Naive thymus-derived CD4-positive, alpha-beta T cell (primary cell): ENCODE measurements at regions of chr2 and their contacts with region 1.

Region 1: GRCh38 chr2:55175254-55176025 is 56.7 kb downstream of the CLHC1 start:
- DNase-seq: peak in 7 of 9 donors; percentile 40 to 69 (median 63)
- ATAC-seq: peak; percentile 96
- H3K4me3 ChIP-seq: no peak overlapping the region
- H3K4me3 Mint-ChIP-seq: peak overlapping the region in 7 of 10 donors; percentile 0 to 49 (median 24)
- H3K27ac ChIP-seq: no peak overlapping the region
- H3K27ac Mint-ChIP-seq: peak overlapping the region in 5 of 9 donors; percentile 2 to 69 (median 46)
- H3K4me1 ChIP-seq: no peaks in the 10 kb centered on the region
- H3K4me1 Mint-ChIP-seq: peaks cover 0 to 10% (median 8%) of the 10 kb centered on the region in 7 donors
- H3K27me3 ChIP-seq: no peaks in the 10 kb centered on the region
- H3K27me3 Mint-ChIP-seq: no peaks in the 10 kb centered on the region

Region 2: GRCh38 chr2:54106631-54107454 is 1068.6 kb before region 1 on chr2:
- CTCF ChIA-PET with region 1: interaction called, 6 read pairs
- POLR2A ChIA-PET with region 1: no interaction called
- intact Hi-C with region 1: loop called (anchors 5 kb)
- DNase-seq: peak in 7 of 9 donors; percentile 39 to 68 (median 51)
- ATAC-seq: peak; percentile 86
- H3K4me3 ChIP-seq: no peak overlapping the region
- H3K4me3 Mint-ChIP-seq: peak overlapping the region in 1 of 10 donors; percentile 28
- H3K27ac ChIP-seq: no peak overlapping the region
- H3K27ac Mint-ChIP-seq: peak overlapping the region in 2 of 9 donors; percentile 20 to 31
- H3K4me1 ChIP-seq: peaks cover 0 to 4% of the 10 kb centered on the region in 2 donors
- H3K4me1 Mint-ChIP-seq: peaks cover 0 to 12% (median 9%) of the 10 kb centered on the region in 7 donors
- H3K27me3 ChIP-seq: no peaks in the 10 kb centered on the region
- H3K27me3 Mint-ChIP-seq: peaks cover 0 to 15% (median 0%) of the 10 kb centered on the region in 5 donors

Region 3: DNA sequence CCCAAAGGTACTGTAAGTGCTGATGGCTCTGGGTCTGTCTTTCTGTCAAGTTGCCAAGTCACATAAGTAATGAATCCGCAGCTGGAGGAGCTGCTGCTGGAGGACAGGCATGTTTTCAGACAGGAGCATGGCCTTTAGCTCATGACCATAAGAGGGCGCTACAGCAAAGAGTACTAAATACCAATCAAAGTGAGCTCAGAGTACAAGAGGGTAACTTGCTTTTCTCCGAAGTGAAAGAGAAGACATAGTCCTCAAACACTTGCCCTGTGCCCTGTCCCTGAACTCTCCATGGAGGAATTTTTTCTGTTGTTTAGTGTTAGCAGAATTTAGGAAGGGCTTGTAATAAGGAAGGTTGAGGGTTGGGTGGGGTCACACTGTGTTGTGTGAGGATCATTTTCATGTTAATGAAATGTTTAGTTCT is 510.0 kb before region 1 on chr2:
- CTCF ChIA-PET with region 1: interaction called, 3 read pairs
- POLR2A ChIA-PET with region 1: no interaction called
- intact Hi-C with region 1: loop called in 1 of 2 experiments (anchors 2 kb)
- DNase-seq: peak in 7 of 9 donors; percentile 15 to 61 (median 50)
- ATAC-seq: peak; percentile 82
- H3K4me3 ChIP-seq: no peak overlapping the region
- H3K4me3 Mint-ChIP-seq: no peak overlapping the region
- H3K27ac ChIP-seq: no peak overlapping the region
- H3K27ac Mint-ChIP-seq: peak overlapping the region in 8 of 9 donors; percentile 42 to 96 (median 86)
- H3K4me1 ChIP-seq: no peaks in the 10 kb centered on the region
- H3K4me1 Mint-ChIP-seq: peaks cover 0 to 20% (median 5%) of the 10 kb centered on the region in 7 donors
- H3K27me3 ChIP-seq: no peaks in the 10 kb centered on the region
- H3K27me3 Mint-ChIP-seq: no peaks in the 10 kb centered on the region

Region 4: DNA sequence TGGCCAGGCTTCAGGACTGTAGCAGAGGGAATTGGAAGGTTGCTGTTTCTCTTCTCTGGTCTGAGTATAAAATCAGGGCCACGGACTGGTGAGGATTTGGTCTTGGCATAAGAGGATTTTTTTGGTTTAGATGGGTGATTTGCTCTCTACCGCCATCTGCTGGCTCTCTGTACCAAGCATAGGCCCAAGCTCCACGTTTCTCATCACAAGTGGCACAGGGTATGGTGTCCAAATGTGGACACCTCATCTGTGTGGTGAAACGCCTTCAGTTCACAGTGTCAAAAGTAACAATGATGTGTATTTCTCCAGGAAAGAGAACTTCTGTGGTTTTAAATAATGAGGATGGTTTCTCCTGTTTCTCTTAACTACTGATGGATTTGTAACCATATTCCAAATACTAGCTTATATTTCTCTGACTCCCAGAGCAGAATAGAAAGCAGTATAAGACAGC is 336.8 kb before region 1 on chr2:
- CTCF ChIA-PET with region 1: interaction called, 6 read pairs
- POLR2A ChIA-PET with region 1: no interaction called
- intact Hi-C with region 1: loop called (anchors 1 kb)
- DNase-seq: peak; percentile 25 to 61 (median 45)
- ATAC-seq: peak; percentile 87
- H3K4me3 ChIP-seq: no peak overlapping the region
- H3K4me3 Mint-ChIP-seq: no peak overlapping the region
- H3K27ac ChIP-seq: no peak overlapping the region
- H3K27ac Mint-ChIP-seq: no peak overlapping the region
- H3K4me1 ChIP-seq: no peaks in the 10 kb centered on the region
- H3K4me1 Mint-ChIP-seq: no peaks in the 10 kb centered on the region
- H3K27me3 ChIP-seq: no peaks in the 10 kb centered on the region
- H3K27me3 Mint-ChIP-seq: peaks cover 0 to 2% (median 0%) of the 10 kb centered on the region in 5 donors

Region 5: GRCh38 chr2:55014962-55015939 is 160.2 kb before region 1 on chr2:
- CTCF ChIA-PET with region 1: interaction called, 26 read pairs
- POLR2A ChIA-PET with region 1: interaction called, 4 read pairs
- intact Hi-C with region 1: loop called (anchors 1 kb)
- DNase-seq: peak in 7 of 9 donors; percentile 13 to 56 (median 41)
- ATAC-seq: peak; percentile 60
- H3K4me3 ChIP-seq: no peak overlapping the region
- H3K4me3 Mint-ChIP-seq: no peak overlapping the region
- H3K27ac ChIP-seq: no peak overlapping the region
- H3K27ac Mint-ChIP-seq: peak overlapping the region in 3 of 9 donors; percentile 0 to 47 (median 14)
- H3K4me1 ChIP-seq: peaks cover 9 to 10% of the 10 kb centered on the region in 2 donors
- H3K4me1 Mint-ChIP-seq: peaks cover 19 to 66% (median 41%) of the 10 kb centered on the region in 7 donors
- H3K27me3 ChIP-seq: no peaks in the 10 kb centered on the region
- H3K27me3 Mint-ChIP-seq: no peaks in the 10 kb centered on the region

Region 6: GRCh38 chr2:56183643-56184499 is 1008.4 kb after region 1 on chr2 and contains the start of gene CCDC85A:
- CTCF ChIA-PET with region 1: no interaction called
- POLR2A ChIA-PET with region 1: no interaction called
- intact Hi-C with region 1: no loop called
- DNase-seq: peak in 8 of 9 donors; percentile 9 to 77 (median 29)
- ATAC-seq: peak; percentile 75
- H3K4me3 ChIP-seq: no peak within 1 kb of the TSS
- H3K4me3 Mint-ChIP-seq: peak within 1 kb of the TSS; percentile 27 to 80 (median 56)
- H3K27ac ChIP-seq: no peak within 1 kb of the TSS
- H3K27ac Mint-ChIP-seq: no peak within 1 kb of the TSS
- H3K4me1 ChIP-seq: no peaks in the 10 kb centered on the region
- H3K4me1 Mint-ChIP-seq: peaks cover 0 to 20% (median 9%) of the 10 kb centered on the region in 7 donors
- H3K27me3 ChIP-seq: peaks cover 0 to 7% of the 10 kb centered on the region in 2 donors
- H3K27me3 Mint-ChIP-seq: peaks cover 56 to 72% (median 67%) of the 10 kb centered on the region in 5 donors
- total RNA-seq, gene CCDC85A: not detected